Prostate gland (tissue), 2 donors: ENCODE measurements at regions of chr7 and their contacts with region 1.

Region 1: DNA sequence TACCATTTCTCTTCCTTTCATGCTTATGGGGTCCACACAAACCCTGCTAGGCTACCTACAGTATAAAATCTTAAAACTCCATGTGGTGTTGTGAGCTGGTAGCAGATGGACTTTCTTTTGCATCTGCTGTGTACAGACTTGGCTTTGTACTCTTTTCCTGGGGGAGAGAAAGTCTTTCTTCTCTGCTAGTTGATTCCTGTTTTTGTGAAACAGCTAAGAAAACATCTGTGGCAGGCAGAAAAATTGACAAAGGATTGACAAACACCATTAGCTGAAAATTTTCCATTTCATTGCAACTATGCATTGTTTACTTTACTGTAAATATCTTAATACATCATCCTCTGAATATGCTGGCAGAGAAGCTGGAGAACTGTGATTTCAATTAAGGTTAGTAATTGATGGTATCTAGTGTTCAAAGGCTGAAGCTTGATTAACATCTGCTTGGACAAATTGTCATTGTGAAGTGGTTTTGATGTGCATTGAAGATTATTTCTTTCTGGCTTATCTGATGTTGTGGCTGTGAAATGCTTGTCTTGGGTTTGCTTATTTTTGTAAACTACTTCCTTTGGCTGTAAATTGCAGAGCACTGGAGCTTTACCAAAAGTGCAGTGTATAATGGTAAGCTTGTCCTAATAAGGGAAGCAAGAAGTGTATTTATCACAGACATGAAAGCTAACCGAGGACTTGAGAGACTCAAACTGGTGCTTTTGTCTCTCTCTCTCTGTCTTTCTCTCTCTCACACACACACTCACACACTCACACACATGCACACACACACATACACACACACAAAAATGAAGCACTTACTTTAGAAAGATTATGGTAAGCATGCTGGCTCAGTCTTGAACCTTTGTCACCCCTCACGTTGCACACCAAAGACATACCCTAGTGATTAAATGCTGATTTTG is at the start of gene FOXP2:
- DNase-seq: no peak
- H3K4me3 ChIP-seq: peak within 1 kb of the TSS; percentile 10 to 14
- H3K27ac ChIP-seq: peak within 1 kb of the TSS in 1 of 2 donors; percentile 45
- H3K4me1 ChIP-seq: no peaks in the 10 kb centered on the region
- H3K27me3 ChIP-seq: no peaks in the 10 kb centered on the region
- CTCF ChIP-seq: no peak
- POLR2A ChIP-seq: no peak
- total RNA-seq, gene FOXP2: 4.9 to 5.6 TPM

Region 2: GRCh38 chr7:114279901-114280300 is 134.5 kb before region 1 on chr7:
- intact Hi-C with region 1: no loop called
- DNase-seq: no peak
- H3K4me3 ChIP-seq: no peak overlapping the region
- H3K27ac ChIP-seq: no peak overlapping the region
- H3K4me1 ChIP-seq: no peaks in the 10 kb centered on the region
- H3K27me3 ChIP-seq: no peaks in the 10 kb centered on the region
- CTCF ChIP-seq: no peak
- POLR2A ChIP-seq: no peak

Region 3: DNA sequence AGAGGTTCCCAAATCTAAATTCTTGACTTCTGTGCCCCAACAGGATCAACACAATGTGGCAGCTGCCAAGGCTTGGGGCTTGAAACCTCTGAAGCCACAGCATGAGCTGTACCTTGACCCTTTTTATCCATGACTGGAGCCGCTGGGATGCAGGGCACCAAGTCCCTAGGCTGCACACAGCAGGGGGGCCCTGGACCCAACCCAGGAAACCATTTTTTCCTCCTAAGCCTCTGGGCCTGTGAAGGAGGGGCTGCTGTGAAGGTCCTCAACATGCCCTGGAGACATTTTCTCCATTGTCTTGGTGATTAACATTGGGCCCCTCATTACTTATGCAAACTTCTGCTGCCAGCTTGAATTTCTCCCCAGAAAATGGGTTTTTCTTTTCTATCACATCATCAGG is 72.8 kb after region 1 on chr7:
- intact Hi-C with region 1: no loop called
- DNase-seq: no peak
- H3K4me3 ChIP-seq: no peak overlapping the region
- H3K27ac ChIP-seq: no peak overlapping the region
- H3K4me1 ChIP-seq: no peaks in the 10 kb centered on the region
- H3K27me3 ChIP-seq: no peaks in the 10 kb centered on the region
- CTCF ChIP-seq: no peak
- POLR2A ChIP-seq: no peak

Region 4: GRCh38 chr7:114663502-114663901 is 249.1 kb after region 1 on chr7:
- intact Hi-C with region 1: loop called (anchors 10 kb)
- DNase-seq: no peak
- H3K4me3 ChIP-seq: no peak overlapping the region
- H3K27ac ChIP-seq: no peak overlapping the region
- H3K4me1 ChIP-seq: no peaks in the 10 kb centered on the region
- H3K27me3 ChIP-seq: no peaks in the 10 kb centered on the region
- CTCF ChIP-seq: peak in 1 of 4 experiments; percentile 12
- POLR2A ChIP-seq: no peak

Region 5: DNA sequence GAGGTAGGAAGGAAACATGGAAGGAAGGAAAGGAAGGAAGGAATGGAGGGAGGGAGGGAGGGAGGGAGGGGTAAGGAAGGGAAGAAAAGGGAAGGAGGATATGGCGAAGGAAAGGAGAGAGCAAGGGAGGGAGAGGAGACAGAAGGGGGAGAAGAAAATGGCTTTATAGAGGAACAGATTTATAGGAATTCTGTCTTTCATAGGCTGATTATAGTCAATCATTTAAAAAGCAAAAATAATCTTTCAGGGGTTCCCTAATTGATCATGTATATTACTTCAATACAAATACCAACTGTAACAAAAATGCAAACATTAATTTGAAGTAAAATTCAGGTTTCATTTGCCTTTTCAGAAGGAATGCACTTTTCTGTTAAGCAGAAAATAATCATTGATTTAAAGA is 1026.6 kb after region 1 on chr7:
- intact Hi-C with region 1: loop called (anchors 5 kb)
- DNase-seq: no peak
- H3K4me3 ChIP-seq: no peak overlapping the region
- H3K27ac ChIP-seq: no peak overlapping the region
- H3K4me1 ChIP-seq: no peaks in the 10 kb centered on the region
- H3K27me3 ChIP-seq: no peaks in the 10 kb centered on the region
- CTCF ChIP-seq: no peak
- POLR2A ChIP-seq: no peak

Region 6: DNA sequence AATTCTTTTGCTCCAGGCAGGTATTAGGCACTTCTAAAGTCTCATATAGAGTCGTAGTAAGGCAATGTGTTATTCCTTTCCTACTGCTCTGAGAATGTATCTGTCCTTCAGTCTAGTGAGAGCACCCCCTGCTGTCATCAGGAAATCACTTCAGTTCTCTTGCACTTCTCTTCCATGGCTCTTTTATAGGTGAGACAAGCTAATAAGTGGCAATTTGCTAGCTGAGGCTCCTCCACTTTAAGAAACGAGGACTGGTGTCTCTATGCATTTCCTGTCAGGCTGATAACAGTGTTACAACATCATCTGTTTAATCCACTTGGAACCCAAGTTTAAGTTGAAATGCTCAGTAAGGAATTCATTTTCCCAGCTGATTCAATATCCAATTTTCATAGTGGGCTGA is 1265.6 kb after region 1 on chr7:
- intact Hi-C with region 1: loop called (anchors 10 kb)
- DNase-seq: no peak
- H3K4me3 ChIP-seq: no peak overlapping the region
- H3K27ac ChIP-seq: no peak overlapping the region
- H3K4me1 ChIP-seq: no peaks in the 10 kb centered on the region
- H3K27me3 ChIP-seq: no peaks in the 10 kb centered on the region
- CTCF ChIP-seq: peak in 3 of 4 experiments; percentile 14 to 31 (median 26)
- POLR2A ChIP-seq: no peak